ENCODE measurements at regions of chr2 and their contacts with region 1.

Region 1: DNA sequence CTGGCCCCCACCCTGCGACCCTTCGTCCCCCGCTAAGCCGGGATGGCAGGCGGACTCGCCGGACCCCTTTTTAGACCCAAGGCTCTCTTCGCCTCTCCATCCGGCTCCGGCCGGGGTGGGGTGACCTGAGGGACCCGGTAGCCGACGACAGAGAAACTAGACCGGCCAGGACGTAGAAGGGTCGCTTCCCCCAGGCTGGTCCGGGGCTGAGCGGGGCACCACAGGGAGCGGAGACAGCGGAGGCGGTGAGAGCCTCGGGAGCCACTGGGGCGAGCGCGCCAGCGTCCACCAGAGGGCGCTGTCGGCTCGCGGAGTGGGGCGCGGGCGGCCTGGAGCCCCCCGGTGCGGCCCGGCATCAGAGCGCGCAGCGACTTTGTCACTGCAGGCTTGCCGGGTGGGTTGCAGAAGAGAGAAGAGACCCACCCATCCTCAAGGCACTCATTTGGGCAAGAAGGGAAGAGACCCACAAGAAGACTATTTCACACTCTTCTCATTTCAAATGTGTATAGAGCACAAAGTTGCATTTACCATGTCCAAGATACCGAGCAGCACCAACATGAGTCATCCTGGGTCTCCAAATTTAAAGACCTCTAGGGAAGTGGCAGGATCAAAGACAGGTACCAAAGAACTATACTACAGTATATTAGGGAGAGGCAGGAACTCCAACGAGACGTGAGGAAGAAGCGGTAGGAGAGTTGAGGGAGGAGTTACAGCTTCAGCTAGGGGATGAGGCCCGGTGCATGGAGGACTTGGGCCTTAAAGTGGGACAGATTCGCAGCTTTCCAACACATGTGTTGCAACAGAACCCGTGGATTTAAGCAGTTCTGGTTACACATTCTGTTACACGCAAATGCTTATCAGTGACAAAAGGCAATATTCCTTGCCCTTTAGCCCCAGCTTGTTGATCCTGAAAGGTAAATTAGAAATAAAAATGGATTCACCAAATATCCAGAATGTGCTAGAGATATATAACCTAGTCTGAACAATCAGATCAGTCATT is 7.6 kb upstream of the PRKCE start:
- H3K4me3 Mint-ChIP-seq: peak overlapping the region; percentile 78
- H3K27ac Mint-ChIP-seq: peak overlapping the region; percentile 79
- H3K4me1 Mint-ChIP-seq: peaks cover 13% of the 10 kb centered on the region
- H3K27me3 Mint-ChIP-seq: peaks cover 53% of the 10 kb centered on the region

Region 2: GRCh38 chr2:45412754-45413379 is 231.0 kb before region 1 on chr2:
- intact Hi-C with region 1: no loop called
- H3K4me3 Mint-ChIP-seq: no peak overlapping the region
- H3K27ac Mint-ChIP-seq: peak overlapping the region; percentile 56
- H3K4me1 Mint-ChIP-seq: peaks cover 10% of the 10 kb centered on the region
- H3K27me3 Mint-ChIP-seq: no peaks in the 10 kb centered on the region

Region 3: GRCh38 chr2:45691171-45691999 is 47.5 kb after region 1 on chr2:
- intact Hi-C with region 1: no loop called
- H3K4me3 Mint-ChIP-seq: no peak overlapping the region
- H3K27ac Mint-ChIP-seq: no peak overlapping the region
- H3K4me1 Mint-ChIP-seq: peaks cover 15% of the 10 kb centered on the region
- H3K27me3 Mint-ChIP-seq: no peaks in the 10 kb centered on the region

Region 4: DNA sequence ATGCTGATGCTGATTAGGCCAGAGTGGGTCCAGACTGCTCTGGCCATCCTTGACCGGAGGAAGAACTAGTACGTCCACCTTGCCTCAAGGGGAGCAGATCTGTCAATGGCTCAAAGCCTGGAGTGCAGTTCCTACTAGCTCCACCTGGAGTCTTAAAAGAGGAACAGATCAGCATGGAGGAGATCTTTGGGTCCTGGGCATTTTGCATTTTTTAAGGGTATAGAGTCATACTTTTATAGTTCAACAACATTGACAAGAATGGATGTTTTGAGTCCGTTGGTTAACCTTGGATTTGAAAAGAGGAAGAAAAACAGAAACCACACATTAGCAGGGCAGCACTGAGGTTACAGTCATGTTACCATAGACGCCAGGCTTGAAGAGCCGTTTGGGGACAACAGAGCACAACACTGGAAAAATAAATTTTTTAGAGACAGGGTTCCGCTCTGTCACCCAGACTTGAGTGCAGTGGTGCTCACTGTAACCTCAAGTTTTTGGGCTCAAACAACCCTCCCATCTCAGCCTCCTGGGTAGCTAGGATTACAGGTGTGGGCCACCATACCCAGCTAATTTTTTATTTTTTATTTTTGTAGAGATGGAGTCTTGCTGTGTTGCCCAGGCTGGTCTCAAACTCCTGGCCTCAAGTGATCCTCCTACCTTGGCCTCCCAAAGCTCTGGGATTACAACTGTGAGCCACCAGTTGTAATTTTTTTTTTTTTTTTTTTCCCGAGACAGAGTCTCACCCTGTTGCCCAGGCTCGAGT is 86.1 kb after region 1 on chr2:
- intact Hi-C with region 1: no loop called
- H3K4me3 Mint-ChIP-seq: no peak overlapping the region
- H3K27ac Mint-ChIP-seq: peak overlapping the region; percentile 46
- H3K4me1 Mint-ChIP-seq: peaks cover 41% of the 10 kb centered on the region
- H3K27me3 Mint-ChIP-seq: no peaks in the 10 kb centered on the region

Region 5: GRCh38 chr2:45935791-45936622 is 292.2 kb after region 1 on chr2:
- intact Hi-C with region 1: loop called (anchors 1 kb)
- H3K4me3 Mint-ChIP-seq: no peak overlapping the region
- H3K27ac Mint-ChIP-seq: no peak overlapping the region
- H3K4me1 Mint-ChIP-seq: peaks cover 6% of the 10 kb centered on the region
- H3K27me3 Mint-ChIP-seq: peaks cover 2% of the 10 kb centered on the region

Region 6: DNA sequence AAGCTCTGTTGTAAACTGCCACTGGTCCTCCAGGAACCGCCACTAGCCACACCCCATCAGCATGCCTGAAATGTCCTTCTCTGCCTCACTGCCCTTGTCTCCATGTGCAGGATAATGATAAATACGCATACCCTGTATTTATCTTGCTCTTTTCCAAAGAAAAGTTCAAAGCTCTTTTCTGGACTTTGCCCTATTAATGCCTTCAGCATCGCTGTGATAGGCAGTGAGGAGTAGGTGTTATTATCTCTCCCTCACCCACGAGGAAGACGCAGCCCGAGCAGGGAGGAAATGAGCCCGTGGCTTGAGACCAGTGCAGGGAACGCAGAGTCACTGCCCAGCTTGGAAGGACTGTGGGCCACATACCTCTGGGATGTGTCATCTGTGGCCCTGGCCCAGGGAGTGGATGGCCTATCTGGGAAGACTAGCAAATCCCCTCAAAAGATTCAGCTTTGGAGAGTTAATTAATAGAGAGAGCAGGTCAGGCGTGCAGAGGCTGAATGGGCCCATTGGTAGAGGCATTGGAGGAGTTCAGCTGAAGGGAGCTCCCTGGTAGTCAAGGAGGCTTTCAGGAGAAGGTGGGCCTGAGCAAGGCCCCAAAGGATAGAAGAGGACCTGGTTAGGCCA is 1311.2 kb after region 1 on chr2:
- intact Hi-C with region 1: no loop called
- H3K4me3 Mint-ChIP-seq: no peak overlapping the region
- H3K27ac Mint-ChIP-seq: peak overlapping the region; percentile 57
- H3K4me1 Mint-ChIP-seq: peaks cover 74% of the 10 kb centered on the region
- H3K27me3 Mint-ChIP-seq: no peaks in the 10 kb centered on the region

Measured in dendritic cell treated with granulocyte-macrophage colony-stimulating factor and Interleukin-4, amounts not matched to agents 40 ng/mL and 50 ng/mL, for 4 days (primary cell).